OCI-LY7 (cell line): ENCODE measurements at regions of chr6 and their contacts with region 1.

Region 1: GRCh38 chr6:163711615-163712565 is 297.4 kb downstream of the QKI start:
- DNase-seq: peak; percentile 84
- H3K4me3 ChIP-seq: peak overlapping the region; percentile 25
- H3K27ac ChIP-seq: peak overlapping the region; percentile 62
- H3K4me1 ChIP-seq: peaks cover 75% of the 10 kb centered on the region
- CTCF ChIP-seq: peak; percentile 77

Region 2: DNA sequence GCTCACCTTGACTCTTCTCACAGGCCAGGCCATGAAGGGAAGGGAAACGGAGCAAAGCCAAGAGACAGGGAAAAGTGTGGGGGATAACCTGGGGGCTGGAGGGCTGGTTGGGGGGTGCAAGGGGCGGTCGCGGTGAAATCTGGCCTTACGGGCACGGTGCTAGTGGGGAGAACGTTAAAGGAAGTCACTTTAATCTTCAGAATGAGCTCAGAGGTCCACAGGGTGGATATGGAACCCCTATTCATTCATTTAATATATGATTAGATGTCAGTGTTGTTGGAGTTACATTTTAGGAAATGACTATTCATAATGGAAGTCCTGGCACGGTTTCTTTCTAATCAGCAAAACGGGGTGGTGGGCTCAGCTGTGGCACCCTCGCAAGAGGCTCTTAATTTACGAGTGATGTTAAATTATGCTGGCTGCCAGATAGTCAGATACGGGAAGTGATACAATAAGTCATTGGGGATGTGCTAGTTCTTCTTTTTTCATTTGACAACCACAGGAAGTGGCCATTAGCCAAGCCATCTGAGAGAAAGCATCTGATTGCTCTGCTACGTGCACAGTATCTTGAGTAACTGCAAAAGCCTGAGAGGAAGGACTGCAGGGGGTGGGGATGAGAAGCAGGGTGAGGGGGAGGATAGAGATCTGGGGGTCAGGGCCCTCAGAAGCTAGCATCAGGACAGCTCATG is 44.4 kb before region 1 on chr6:
- CTCF ChIA-PET with region 1: no interaction called
- POLR2A ChIA-PET with region 1: interaction called, 5 read pairs
- intact Hi-C with region 1: loop called (anchors 1 kb)
- DNase-seq: peak; percentile 94
- H3K4me3 ChIP-seq: peak overlapping the region; percentile 43
- H3K27ac ChIP-seq: peak overlapping the region; percentile 75
- H3K4me1 ChIP-seq: peaks cover 26% of the 10 kb centered on the region
- CTCF ChIP-seq: no peak

Region 3: DNA sequence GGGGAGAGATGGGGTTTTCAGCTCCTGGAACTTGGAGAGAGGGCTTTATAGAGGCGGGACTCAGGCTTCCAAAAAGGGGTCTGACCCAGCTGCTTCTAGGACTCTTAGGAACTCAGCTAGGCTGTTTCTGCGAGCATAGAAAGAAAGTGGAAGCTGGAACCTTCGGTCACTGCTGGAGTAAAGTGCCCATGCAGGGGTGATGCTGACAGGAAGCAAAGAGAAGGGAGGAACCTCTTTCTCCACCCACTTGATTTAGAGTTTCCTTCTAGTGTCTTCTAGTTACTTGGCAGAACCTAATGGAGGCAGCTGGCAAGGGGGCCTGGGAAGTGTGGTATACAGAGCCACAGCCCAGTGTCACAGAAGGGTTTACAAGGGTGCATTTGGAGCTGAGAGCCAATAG is 13.8 kb before region 1 on chr6:
- CTCF ChIA-PET with region 1: no interaction called
- POLR2A ChIA-PET with region 1: interaction called, 18 read pairs
- intact Hi-C with region 1: no loop called
- DNase-seq: no peak
- H3K4me3 ChIP-seq: no peak overlapping the region
- H3K27ac ChIP-seq: no peak overlapping the region
- H3K4me1 ChIP-seq: peaks cover 12% of the 10 kb centered on the region
- CTCF ChIP-seq: no peak

Region 4: DNA sequence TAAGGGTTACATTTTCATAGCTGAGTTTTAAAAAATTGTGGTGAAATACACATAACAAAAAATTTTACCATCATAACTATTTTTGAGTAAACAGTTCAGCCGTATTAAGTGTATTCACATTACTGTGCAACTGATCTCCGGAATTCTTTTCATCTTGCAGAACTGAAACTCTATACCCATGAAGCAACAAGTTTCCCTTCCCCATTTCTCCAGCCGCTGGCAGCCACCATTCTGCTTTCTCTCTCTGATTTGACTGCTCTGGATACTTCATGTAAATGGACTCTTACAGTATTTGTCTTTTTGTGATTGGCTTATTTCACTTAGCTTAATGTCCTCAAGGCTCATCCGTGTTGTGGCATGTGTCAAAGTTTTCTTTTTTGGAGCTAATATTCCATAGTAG is 44.2 kb after region 1 on chr6:
- CTCF ChIA-PET with region 1: interaction called, 5 read pairs
- POLR2A ChIA-PET with region 1: interaction called, 7 read pairs
- intact Hi-C with region 1: loop called (anchors 1 kb)
- DNase-seq: peak; percentile 93
- H3K4me3 ChIP-seq: peak overlapping the region; percentile 55
- H3K27ac ChIP-seq: peak overlapping the region; percentile 86
- H3K4me1 ChIP-seq: peaks cover 54% of the 10 kb centered on the region
- CTCF ChIP-seq: no peak

Region 5: DNA sequence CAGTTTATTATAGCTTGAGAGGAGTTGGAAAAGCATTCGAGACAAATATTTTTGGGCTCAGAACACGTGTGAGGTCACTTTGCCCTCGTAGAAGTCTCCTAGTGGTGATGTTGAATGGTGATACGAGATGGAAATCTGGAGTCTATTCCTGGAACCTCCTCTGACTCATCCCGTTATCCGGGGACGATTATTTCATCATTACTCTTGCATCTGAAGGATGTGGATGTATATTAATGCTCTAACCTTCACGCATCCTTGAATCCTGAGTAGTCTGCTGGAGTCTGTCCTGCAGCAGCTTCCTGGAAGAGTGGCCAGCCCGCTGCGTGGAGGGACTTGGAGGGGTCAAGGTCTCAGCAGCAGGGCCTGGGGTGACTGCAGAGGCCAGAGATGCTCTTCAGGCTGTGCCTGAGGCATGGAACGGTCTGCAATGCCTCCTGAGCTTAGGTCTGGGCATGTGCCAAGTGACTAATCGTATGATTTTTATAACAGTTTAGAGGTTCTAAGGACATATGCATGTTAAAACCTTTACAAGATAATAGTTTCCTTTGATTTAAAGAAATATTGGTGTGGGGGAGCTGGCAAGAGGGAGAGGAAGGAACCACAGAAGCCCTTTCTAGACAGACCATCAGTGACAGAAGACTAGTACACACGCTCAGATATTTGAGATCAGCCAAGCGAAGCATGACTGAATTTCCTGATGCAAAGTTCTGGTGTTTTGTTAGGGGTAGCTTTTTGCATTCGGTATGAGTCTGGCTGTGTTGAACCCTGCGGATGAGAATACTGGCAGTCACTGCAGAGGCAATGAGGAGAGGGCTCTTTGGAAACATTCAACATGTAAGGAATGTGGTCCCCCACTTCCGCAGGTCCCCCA is 102.8 kb after region 1 on chr6:
- CTCF ChIA-PET with region 1: interaction called, 3 read pairs
- POLR2A ChIA-PET with region 1: no interaction called
- intact Hi-C with region 1: loop called (anchors 2 kb)
- DNase-seq: peak; percentile 67
- H3K4me3 ChIP-seq: no peak overlapping the region
- H3K27ac ChIP-seq: no peak overlapping the region
- H3K4me1 ChIP-seq: peaks cover 19% of the 10 kb centered on the region
- CTCF ChIP-seq: no peak

Region 6: GRCh38 chr6:163956571-163957407 is 244.9 kb after region 1 on chr6:
- CTCF ChIA-PET with region 1: no interaction called
- POLR2A ChIA-PET with region 1: no interaction called
- intact Hi-C with region 1: loop called (anchors 1 kb)
- DNase-seq: peak; percentile 84
- H3K4me3 ChIP-seq: no peak overlapping the region
- H3K27ac ChIP-seq: no peak overlapping the region
- H3K4me1 ChIP-seq: no peaks in the 10 kb centered on the region
- CTCF ChIP-seq: peak; percentile 99